ENCODE measurements at regions of chr13 and their contacts with region 1.

Region 1: GRCh38 chr13:73835138-73835721 is 299.0 kb downstream of the KLF12 start:
- DNase-seq: peak; percentile 55
- H3K4me3 ChIP-seq: no peak overlapping the region
- H3K27ac ChIP-seq: no peak overlapping the region
- H3K4me1 ChIP-seq: peaks cover 4% of the 10 kb centered on the region
- H3K27me3 ChIP-seq: no peaks in the 10 kb centered on the region
- CTCF ChIP-seq: peak; percentile 27 to 37
- POLR2A ChIP-seq: no peak

Region 2: DNA sequence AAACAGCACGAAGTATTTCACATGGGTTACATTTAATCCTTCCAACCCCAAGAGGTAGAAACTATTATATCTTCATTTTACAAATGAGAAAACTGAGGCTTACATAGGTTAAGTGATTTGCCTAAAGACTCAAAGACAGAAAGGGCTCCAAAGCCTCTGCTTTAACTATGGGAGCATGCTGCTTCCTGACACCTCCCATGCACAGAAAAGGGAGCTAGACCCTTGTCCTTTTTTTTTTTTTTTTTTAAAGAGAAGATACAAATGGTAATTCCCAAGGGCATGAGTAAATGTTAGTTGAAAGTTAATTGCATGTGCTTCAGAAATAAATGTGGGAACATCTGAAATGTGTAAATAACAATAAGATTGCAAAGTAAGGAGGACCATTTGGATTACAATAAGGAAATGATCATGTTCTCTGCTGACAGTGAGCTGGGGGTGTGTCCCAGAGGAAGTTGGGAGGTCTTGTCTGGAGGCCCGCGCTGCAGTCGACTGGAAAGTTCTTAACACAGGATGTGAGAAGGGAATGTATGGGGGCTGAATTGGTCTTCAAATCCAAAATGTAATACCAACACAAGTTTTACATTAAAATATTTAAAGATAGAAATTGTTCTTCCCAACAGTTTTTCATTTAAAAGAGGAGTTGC is 201.3 kb before region 1 on chr13:
- CTCF ChIA-PET with region 1: no interaction called
- POLR2A ChIA-PET with region 1: no interaction called
- dilution Hi-C with region 1: no loop called
- intact Hi-C with region 1: no loop called
- DNase-seq: no peak
- H3K4me3 ChIP-seq: no peak overlapping the region
- H3K27ac ChIP-seq: no peak overlapping the region
- H3K4me1 ChIP-seq: no peaks in the 10 kb centered on the region
- H3K27me3 ChIP-seq: no peaks in the 10 kb centered on the region
- CTCF ChIP-seq: no peak
- POLR2A ChIP-seq: no peak

Region 3: GRCh38 chr13:73687087-73687486 is 148.1 kb before region 1 on chr13:
- CTCF ChIA-PET with region 1: no interaction called
- POLR2A ChIA-PET with region 1: no interaction called
- dilution Hi-C with region 1: no loop called
- intact Hi-C with region 1: no loop called
- DNase-seq: no peak
- H3K4me3 ChIP-seq: no peak overlapping the region
- H3K27ac ChIP-seq: no peak overlapping the region
- H3K4me1 ChIP-seq: no peaks in the 10 kb centered on the region
- H3K27me3 ChIP-seq: no peaks in the 10 kb centered on the region
- CTCF ChIP-seq: no peak
- POLR2A ChIP-seq: no peak

Region 4: GRCh38 chr13:73754727-73755292 is 80.4 kb before region 1 on chr13:
- CTCF ChIA-PET with region 1: interaction called, 3 read pairs
- POLR2A ChIA-PET with region 1: no interaction called
- dilution Hi-C with region 1: no loop called
- intact Hi-C with region 1: loop called (anchors 2 kb)
- DNase-seq: peak; percentile 79
- H3K4me3 ChIP-seq: no peak overlapping the region
- H3K27ac ChIP-seq: no peak overlapping the region
- H3K4me1 ChIP-seq: no peaks in the 10 kb centered on the region
- H3K27me3 ChIP-seq: no peaks in the 10 kb centered on the region
- CTCF ChIP-seq: peak; percentile 36 to 51
- POLR2A ChIP-seq: no peak

Region 5: DNA sequence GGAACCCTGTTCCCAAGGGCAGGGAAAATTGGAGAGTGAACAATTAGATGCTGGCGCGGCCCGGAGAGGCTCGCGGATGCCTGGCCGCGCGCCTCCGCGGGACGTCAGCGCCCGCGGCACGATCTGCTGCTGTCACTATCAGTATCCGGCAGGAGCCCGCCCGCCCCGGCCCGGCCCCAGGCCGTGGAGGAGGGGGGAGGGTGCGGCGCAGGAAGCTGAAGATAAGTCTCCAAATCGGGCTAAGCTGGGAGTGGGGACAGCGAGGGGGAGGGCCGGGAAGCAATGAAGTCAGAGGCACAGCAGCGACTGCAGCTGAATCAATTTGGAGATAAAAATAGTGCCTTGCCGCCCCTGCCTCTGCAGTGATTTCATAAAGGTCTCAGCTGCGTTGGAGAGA is 740.5 kb after region 1 on chr13:
- CTCF ChIA-PET with region 1: no interaction called
- POLR2A ChIA-PET with region 1: no interaction called
- dilution Hi-C with region 1: no loop called
- intact Hi-C with region 1: loop called (anchors 10 kb)
- DNase-seq: peak; percentile 62
- H3K4me3 ChIP-seq: peak overlapping the region; percentile 14 to 21 (median 19)
- H3K27ac ChIP-seq: no peak overlapping the region
- H3K4me1 ChIP-seq: peaks cover 6% of the 10 kb centered on the region
- H3K27me3 ChIP-seq: peaks cover 0 to 2% of the 10 kb centered on the region in 2 experiments
- CTCF ChIP-seq: no peak
- POLR2A ChIP-seq: no peak

Region 6: DNA sequence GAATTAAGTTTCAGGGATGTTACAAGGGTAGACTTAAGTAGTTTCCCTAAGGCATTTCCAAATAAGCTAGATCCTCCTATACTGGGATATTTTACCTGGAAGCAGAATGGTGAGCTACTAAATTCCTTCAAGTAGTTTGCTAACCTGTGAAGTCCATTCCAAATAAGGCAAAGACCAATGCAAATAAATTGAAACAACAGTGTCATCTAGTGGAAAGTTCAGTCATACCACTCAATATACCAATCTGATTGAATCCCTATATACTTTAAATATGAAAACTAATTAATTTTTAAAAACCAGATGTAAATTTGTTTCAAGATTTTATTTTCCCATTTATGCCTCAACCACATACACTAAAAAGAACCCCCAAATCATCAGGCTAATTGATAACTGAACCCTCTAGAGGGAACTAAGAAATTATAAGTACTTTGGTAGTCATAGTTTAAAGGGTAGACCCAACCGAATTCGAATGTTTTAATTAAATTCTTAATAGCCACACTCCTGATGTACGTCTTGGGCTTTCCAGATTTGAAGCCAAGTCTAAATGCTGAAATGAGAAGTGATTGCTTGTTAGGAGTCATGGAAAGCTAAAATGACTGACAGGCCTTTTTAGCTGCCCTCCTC is 1423.0 kb after region 1 on chr13:
- CTCF ChIA-PET with region 1: interaction called, 12 read pairs
- POLR2A ChIA-PET with region 1: no interaction called
- dilution Hi-C with region 1: no loop called
- intact Hi-C with region 1: loop called (anchors 5 kb)
- DNase-seq: peak; percentile 65
- H3K4me3 ChIP-seq: no peak overlapping the region
- H3K27ac ChIP-seq: no peak overlapping the region
- H3K4me1 ChIP-seq: no peaks in the 10 kb centered on the region
- H3K27me3 ChIP-seq: peaks cover 13 to 33% of the 10 kb centered on the region in 2 experiments
- CTCF ChIP-seq: peak; percentile 35 to 37
- POLR2A ChIP-seq: no peak